ENCODE measurements at regions of chr11 and their contacts with region 1.

Region 1: DNA sequence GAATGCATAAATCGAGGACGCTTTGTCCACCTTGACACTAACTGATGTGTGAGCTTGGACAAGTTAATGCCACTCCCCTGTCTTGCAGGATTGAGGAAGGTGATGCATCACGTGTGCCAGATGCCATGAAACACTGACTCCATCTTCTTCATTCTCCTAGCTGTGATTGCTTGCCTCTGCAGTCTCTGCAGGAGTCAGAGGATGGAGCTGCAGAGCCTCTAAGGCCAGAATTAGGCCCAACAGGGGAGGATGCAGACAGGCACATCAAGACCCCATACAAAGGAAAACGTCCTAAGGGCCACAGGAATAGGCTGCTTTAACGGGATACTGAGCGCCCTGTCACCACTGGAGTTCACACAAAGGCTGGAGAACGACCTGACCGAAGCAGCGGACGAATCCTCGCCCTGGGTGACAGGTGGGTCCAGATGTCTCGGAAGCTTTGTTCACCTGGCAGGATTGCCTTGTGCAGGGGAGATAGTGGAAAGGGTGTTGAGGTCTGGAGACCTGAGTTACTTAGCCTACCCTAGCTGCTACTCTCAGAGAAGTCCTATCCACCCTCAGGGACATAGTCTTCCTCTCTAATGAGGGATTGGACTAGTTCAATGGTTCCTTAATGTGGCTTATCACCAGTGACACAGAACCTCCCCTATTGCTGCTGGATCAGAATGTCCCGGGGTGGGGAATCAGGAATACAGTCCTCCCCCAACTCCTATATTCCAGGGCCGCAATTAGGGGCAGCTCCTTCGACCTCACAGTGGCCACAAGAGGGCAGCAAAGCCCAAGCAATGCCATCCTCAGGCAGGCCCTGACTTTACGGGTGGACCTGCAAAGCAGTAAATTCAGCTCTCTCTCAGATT is 32.4 kb downstream of the DBX1 start:
- DNase-seq: peak; percentile 15 to 84 (median 64)
- ATAC-seq: peak; percentile 53 to 82 (median 70)
- H3K4me3 ChIP-seq: no peak overlapping the region
- H3K4me3 Mint-ChIP-seq: no peak overlapping the region
- H3K27ac ChIP-seq: no peak overlapping the region
- H3K27ac Mint-ChIP-seq: no peak overlapping the region
- H3K4me1 ChIP-seq: peaks cover 4 to 12% of the 10 kb centered on the region in 2 experiments
- H3K4me1 Mint-ChIP-seq: peaks cover 10 to 14% (median 12%) of the 10 kb centered on the region in 3 donors
- H3K27me3 ChIP-seq: peaks cover 6 to 20% of the 10 kb centered on the region in 2 experiments
- H3K27me3 Mint-ChIP-seq: peaks cover 7 to 15% of the 10 kb centered on the region in 2 donors

Region 2: DNA sequence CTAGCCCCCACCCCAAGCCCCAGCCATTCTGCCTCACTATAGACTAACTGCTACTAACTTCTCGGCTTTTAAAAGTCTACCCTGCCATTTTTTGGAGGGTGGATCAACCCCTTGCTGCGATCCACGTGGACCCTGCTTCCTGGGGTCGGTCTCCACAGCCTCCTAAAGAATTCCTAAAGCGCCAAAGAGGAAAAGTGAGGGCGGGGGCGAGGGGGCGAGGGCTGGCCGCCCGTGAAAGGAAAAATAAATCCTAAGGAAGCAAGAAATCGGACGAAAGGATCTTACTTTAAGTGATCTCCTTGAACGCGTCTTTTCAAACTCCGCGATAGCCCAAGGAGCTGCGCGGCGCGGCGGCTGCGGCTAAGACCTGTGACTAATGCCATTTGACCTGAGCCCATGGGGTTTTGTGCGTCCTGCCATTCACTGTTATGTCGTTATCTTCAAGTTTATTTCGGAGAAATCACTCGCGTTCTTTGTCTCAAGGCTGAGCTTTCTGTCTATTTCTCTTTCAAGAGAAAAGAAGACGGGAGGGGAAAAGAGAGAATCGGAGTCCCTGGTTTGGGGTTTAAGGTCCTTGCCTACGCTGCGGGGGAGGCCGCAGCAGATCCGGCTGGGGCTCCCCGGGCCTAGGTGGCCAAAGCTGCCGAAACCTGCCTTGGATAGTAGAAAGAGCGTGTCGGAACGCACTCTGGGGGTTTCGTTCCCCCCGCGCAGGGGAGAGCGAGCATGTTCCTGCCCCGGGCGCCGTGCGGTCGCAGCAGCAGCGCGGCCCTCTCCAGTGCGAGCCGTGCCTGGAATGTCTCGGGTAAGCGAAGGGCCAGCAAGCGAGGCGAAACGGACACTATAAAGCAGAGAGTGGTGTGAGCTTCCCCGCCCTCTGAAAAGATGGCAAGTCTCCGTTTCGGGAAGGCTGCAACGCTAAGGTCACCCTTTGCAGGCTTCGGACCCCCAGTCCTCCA is 35.2 kb after region 1 on chr11:
- CTCF ChIA-PET with region 1: interaction called in 1 of 2 experiments, 11 read pairs
- POLR2A ChIA-PET with region 1: no interaction called
- DNase-seq: peak in 1 of 35 experiments; percentile 25
- ATAC-seq: peak in 1 of 4 experiments; percentile 36
- H3K4me3 ChIP-seq: peak overlapping the region; percentile 23 to 47
- H3K4me3 Mint-ChIP-seq: peak overlapping the region; percentile 58 to 84 (median 65)
- H3K27ac ChIP-seq: no peak overlapping the region
- H3K27ac Mint-ChIP-seq: peak overlapping the region in 1 of 2 donors; percentile 52
- H3K4me1 ChIP-seq: peaks cover 0 to 36% of the 10 kb centered on the region in 2 experiments
- H3K4me1 Mint-ChIP-seq: peaks cover 32 to 38% (median 33%) of the 10 kb centered on the region in 3 donors
- H3K27me3 ChIP-seq: peaks cover 53 to 81% of the 10 kb centered on the region in 2 experiments
- H3K27me3 Mint-ChIP-seq: peaks cover 90% of the 10 kb centered on the region in 2 donors

Region 3: DNA sequence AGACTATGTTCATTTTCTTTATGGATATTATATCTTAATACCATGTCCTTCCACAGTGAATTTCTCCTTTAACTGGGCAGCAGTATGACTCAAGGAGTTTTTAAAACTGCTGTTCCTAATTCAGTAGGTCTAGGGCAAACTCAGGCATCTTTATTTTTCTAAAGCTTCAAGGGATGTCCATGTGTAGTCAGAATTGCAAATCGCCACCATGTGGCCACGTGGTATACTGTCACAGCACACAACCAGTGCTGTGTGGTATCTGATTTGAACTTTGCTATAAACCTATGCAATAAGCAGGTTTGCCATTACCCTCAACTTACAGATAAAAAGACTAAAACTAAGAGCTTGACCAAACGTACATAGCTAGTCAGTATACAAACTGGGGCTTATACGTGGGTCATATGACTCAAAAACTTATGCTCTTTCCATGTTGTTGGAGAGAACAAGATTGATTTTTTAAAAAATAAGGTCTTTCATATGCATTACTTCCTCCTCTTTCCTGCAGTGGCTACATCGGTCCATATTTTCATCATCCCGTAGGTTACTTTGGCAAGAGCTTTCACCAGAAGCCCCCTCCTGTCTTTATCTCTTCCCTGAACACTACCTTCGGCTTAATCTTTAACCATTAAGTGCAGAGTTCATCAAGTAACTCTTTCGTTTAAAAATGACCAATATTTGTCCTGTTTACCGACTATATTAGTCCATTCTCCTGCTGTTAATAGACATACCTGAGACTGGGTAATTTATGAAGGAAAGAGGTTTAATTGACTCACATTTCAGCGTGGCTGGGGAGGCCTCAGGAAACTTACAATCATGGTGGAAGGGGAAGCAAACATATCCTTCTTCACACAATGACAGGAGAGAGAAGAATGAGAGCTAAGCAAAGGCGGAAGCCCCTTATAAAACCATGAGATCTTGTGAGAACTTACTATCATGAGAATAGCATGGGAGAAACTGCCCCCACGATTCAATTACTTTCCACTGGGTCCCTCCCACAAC is 227.6 kb after region 1 on chr11:
- CTCF ChIA-PET with region 1: interaction called, 7 to 37 read pairs
- POLR2A ChIA-PET with region 1: no interaction called
- DNase-seq: peak in 24 of 35 experiments; percentile 12 to 66 (median 26)
- ATAC-seq: peak; percentile 83 to 91 (median 86)
- H3K4me3 ChIP-seq: no peak overlapping the region
- H3K4me3 Mint-ChIP-seq: no peak overlapping the region
- H3K27ac ChIP-seq: no peak overlapping the region
- H3K27ac Mint-ChIP-seq: no peak overlapping the region
- H3K4me1 ChIP-seq: peaks cover 3 to 8% of the 10 kb centered on the region in 2 experiments
- H3K4me1 Mint-ChIP-seq: peaks cover 14 to 19% (median 18%) of the 10 kb centered on the region in 3 donors
- H3K27me3 ChIP-seq: no peaks in the 10 kb centered on the region
- H3K27me3 Mint-ChIP-seq: peaks cover 0 to 5% of the 10 kb centered on the region in 2 donors

Measured in T-cell (primary cell).